B cell (primary cell): ENCODE measurements at regions of chr13 and their contacts with region 1.

Region 1: DNA sequence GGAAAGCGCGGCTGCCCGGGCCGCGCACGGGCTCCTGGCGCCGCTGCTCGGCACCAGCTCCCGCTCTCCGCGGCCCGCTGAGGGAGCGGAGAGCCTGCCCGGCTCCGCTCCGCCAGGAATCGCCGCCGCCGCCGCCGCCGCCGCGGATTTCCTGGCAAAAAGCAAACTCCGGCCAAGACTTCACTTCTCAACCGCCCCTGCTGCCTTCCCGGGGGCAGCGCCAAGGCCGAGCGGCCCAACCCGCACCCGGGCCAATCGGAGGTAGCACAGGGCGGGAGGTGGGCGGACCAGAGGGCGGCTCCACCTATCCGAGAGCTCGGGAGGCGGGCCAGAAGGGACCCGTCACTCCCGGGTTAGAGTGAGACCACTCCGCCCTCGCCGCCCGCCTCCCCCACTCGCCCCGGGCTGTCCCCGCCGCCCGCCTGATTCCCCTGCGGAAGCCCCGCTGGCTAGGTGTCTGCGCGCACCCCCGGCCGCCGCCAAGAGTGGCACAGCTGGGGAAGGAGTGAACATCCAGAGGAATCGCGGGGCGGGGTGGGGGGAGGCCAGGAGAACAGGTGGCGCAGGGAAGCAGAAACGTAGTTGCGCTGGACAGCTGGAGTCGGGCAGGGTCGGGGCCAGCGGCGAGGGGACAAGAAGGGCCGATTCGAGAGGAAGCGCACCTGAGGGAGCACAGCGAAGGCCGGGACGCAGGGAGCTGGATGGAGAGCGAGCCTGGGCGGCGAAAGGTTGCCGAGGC is at the start of gene LNX2:
- DNase-seq: peak; percentile 96
- ATAC-seq: peak; percentile 83
- H3K4me3 ChIP-seq: peak within 1 kb of the TSS; percentile 77 to 92 (median 90)
- H3K4me3 Mint-ChIP-seq: peak within 1 kb of the TSS; percentile 93
- H3K27ac ChIP-seq: peak within 1 kb of the TSS; percentile 98
- H3K27ac Mint-ChIP-seq: peak within 1 kb of the TSS; percentile 92
- H3K4me1 ChIP-seq: peaks cover 27 to 28% of the 10 kb centered on the region in 2 donors
- H3K4me1 Mint-ChIP-seq: peaks cover 62% of the 10 kb centered on the region
- H3K27me3 ChIP-seq: no peaks in the 10 kb centered on the region
- H3K27me3 Mint-ChIP-seq: no peaks in the 10 kb centered on the region
- CTCF ChIP-seq: no peak
- total RNA-seq, gene LNX2: 10.0 and 10.9 TPM in 2 replicates

Region 2: DNA sequence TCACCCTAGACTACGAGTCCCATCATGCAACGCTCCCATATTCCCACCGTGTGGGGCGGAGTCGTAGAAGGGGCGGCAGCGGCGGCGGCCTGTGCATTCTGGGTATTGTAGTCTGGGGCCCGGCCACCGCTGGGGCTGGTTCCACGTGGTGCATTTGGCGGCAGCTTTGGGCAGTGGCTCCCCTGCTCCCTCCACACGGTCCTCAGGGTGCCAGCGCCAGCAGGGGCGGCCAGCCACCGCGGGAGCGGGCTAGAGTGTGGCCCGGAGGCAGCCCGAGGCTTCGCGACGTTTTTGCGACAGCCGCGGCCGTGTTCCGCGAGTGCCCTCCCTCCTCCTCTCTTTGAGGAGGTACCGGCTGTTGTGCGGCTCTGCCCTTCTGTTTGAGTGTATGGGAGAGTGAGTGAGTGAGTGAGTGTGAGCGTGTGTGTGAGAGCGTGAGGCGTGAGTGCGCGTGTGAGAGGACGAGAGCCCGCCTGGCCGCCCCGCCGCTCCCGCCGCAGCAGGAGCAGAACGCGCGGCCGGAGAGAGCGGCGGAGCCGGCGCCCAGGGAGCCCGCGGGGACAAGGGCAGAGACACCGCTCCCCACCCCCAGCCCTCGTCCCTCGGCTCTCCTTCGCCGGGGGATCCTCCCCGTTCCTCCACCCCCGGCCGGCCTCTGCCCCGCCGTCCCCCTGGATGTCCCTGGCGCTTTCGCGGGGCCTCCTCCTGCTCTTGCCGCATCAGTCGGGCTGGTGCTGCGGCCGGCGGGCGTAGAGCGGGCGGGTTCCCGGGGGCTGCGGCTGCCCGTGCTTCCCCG is 1366.6 kb before region 1 on chr13 and contains the start of gene CDK8:
- CTCF ChIA-PET with region 1: no interaction called
- POLR2A ChIA-PET with region 1: no interaction called
- intact Hi-C with region 1: loop called (anchors 5 kb)
- DNase-seq: peak; percentile 97
- ATAC-seq: peak; percentile 86
- H3K4me3 ChIP-seq: peak within 1 kb of the TSS; percentile 66 to 98 (median 77)
- H3K4me3 Mint-ChIP-seq: peak within 1 kb of the TSS; percentile 83
- H3K27ac ChIP-seq: peak within 1 kb of the TSS; percentile 72 to 80
- H3K27ac Mint-ChIP-seq: peak within 1 kb of the TSS; percentile 81
- H3K4me1 ChIP-seq: peaks cover 14 to 17% of the 10 kb centered on the region in 2 donors
- H3K4me1 Mint-ChIP-seq: peaks cover 29% of the 10 kb centered on the region
- H3K27me3 ChIP-seq: peaks cover 0 to 4% (median 2%) of the 10 kb centered on the region in 4 experiments
- H3K27me3 Mint-ChIP-seq: peaks cover 8% of the 10 kb centered on the region
- CTCF ChIP-seq: no peak
- total RNA-seq, gene CDK8: 13.5 TPM in 2 replicates

Region 3: DNA sequence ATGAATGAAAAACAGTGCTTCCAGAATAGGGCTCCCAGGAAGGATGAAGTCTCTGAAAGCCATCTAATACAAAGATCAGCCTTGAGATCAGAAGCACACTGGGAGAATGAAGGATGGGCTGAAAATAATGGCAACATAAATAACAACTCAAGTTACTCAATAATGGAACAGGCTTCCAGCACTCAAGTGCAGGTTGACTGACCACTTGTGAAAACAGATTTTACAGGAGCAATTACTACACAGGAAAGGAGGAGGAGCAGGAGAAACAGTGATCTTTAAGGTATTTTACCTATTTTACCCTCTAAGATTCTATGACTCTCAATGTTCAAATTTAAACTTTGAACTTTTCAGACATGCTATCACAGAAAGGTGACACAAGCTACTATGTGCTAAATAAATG is 555.0 kb before region 1 on chr13:
- CTCF ChIA-PET with region 1: no interaction called
- POLR2A ChIA-PET with region 1: no interaction called
- intact Hi-C with region 1: no loop called
- DNase-seq: no peak
- ATAC-seq: no peak
- H3K4me3 ChIP-seq: no peak overlapping the region
- H3K4me3 Mint-ChIP-seq: no peak overlapping the region
- H3K27ac ChIP-seq: no peak overlapping the region
- H3K27ac Mint-ChIP-seq: no peak overlapping the region
- H3K4me1 ChIP-seq: no peaks in the 10 kb centered on the region
- H3K4me1 Mint-ChIP-seq: no peaks in the 10 kb centered on the region
- H3K27me3 ChIP-seq: no peaks in the 10 kb centered on the region
- H3K27me3 Mint-ChIP-seq: no peaks in the 10 kb centered on the region
- CTCF ChIP-seq: no peak

Region 4: DNA sequence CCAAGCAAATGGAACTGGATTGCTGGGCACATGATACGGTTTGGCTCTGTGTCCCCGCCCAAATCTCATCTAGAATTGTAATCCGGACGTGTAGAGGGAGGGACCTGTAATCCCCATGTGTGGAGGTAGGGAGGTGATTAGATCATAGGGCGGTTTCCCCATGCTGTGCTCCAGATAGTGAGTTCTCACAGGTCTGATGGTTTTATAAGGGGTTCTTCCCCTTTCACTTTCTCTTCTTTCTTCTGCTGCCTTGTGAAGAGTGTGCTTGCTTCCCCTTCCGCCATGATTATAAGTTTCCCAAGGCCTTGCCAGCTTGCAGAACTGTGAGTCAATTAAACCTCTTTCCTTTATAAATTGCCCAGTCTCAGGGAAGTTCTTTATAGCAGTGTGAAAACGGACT is 137.6 kb before region 1 on chr13:
- CTCF ChIA-PET with region 1: interaction called, 3 read pairs
- POLR2A ChIA-PET with region 1: interaction called, 4 read pairs
- intact Hi-C with region 1: loop called (anchors 1 kb)
- DNase-seq: peak; percentile 90
- ATAC-seq: peak; percentile 99
- H3K4me3 ChIP-seq: peak overlapping the region in 4 of 5 experiments; percentile 11 to 43 (median 30)
- H3K4me3 Mint-ChIP-seq: peak overlapping the region; percentile 81
- H3K27ac ChIP-seq: peak overlapping the region; percentile 71 to 82
- H3K27ac Mint-ChIP-seq: peak overlapping the region; percentile 93
- H3K4me1 ChIP-seq: peaks cover 37 to 45% of the 10 kb centered on the region in 2 donors
- H3K4me1 Mint-ChIP-seq: peaks cover 41% of the 10 kb centered on the region
- H3K27me3 ChIP-seq: no peaks in the 10 kb centered on the region
- H3K27me3 Mint-ChIP-seq: no peaks in the 10 kb centered on the region
- CTCF ChIP-seq: no peak

Region 5: DNA sequence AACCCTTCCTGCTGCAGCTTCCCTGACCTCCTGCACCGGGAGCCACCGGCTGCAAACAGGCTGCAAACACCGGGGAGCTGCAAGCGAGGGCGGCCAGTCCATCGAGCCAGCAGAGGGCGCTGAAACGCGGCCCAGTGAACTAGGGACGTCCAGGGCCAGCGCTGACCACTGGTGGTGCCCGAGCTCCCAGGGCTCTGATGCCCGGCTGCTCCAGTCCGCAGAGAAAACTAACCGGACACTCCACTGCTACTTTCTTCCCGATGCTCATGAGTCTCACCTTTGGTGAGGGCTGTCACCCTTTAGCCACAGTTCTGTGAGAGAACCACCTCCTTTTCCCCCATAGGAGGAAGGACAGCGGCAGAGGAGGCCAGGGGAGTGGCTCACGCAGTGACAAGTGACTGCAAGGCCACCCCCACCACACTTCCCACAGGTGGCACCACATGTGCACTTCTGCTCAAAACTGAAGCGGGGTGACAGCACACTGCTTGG is 87.3 kb before region 1 on chr13:
- CTCF ChIA-PET with region 1: interaction called, 13 read pairs
- POLR2A ChIA-PET with region 1: no interaction called
- intact Hi-C with region 1: loop called (anchors 10 kb)
- DNase-seq: peak; percentile 57
- ATAC-seq: peak; percentile 70
- H3K4me3 ChIP-seq: peak overlapping the region in 3 of 5 experiments; percentile 16 to 44 (median 17)
- H3K4me3 Mint-ChIP-seq: peak overlapping the region; percentile 69
- H3K27ac ChIP-seq: no peak overlapping the region
- H3K27ac Mint-ChIP-seq: no peak overlapping the region
- H3K4me1 ChIP-seq: peaks cover 9 to 15% of the 10 kb centered on the region in 2 donors
- H3K4me1 Mint-ChIP-seq: peaks cover 26% of the 10 kb centered on the region
- H3K27me3 ChIP-seq: no peaks in the 10 kb centered on the region
- H3K27me3 Mint-ChIP-seq: no peaks in the 10 kb centered on the region
- CTCF ChIP-seq: peak; percentile 73

Region 6: GRCh38 chr13:27595055-27595811 is 25.3 kb before region 1 on chr13:
- CTCF ChIA-PET with region 1: interaction called, 3 read pairs
- POLR2A ChIA-PET with region 1: no interaction called
- intact Hi-C with region 1: loop called (anchors 2 kb)
- DNase-seq: peak; percentile 37
- ATAC-seq: peak; percentile 28
- H3K4me3 ChIP-seq: no peak overlapping the region
- H3K4me3 Mint-ChIP-seq: no peak overlapping the region
- H3K27ac ChIP-seq: no peak overlapping the region
- H3K27ac Mint-ChIP-seq: no peak overlapping the region
- H3K4me1 ChIP-seq: peaks cover 40 to 43% of the 10 kb centered on the region in 2 donors
- H3K4me1 Mint-ChIP-seq: peaks cover 1% of the 10 kb centered on the region
- H3K27me3 ChIP-seq: no peaks in the 10 kb centered on the region
- H3K27me3 Mint-ChIP-seq: no peaks in the 10 kb centered on the region
- CTCF ChIP-seq: no peak

Region 7: DNA sequence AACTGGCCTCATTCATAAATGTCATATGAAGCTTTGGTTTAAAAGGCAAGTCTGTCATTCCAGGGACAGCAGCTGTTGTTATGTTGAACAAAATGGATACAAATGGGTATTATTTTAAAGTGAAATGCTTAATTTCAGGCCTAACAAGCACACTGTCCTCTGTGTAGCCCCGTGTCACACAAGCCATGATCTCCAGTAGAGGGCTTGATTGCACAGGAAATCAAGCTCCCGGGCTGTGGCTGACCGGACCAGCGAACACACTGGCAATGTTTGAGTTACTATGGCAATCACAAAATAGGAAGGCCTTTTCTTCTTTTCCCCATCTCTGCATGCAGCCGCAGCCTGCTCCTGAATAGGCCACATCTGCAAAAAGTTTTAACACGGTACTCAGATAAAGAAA is 107.7 kb after region 1 on chr13:
- CTCF ChIA-PET with region 1: no interaction called
- POLR2A ChIA-PET with region 1: no interaction called
- intact Hi-C with region 1: no loop called
- DNase-seq: no peak
- ATAC-seq: no peak
- H3K4me3 ChIP-seq: no peak overlapping the region
- H3K4me3 Mint-ChIP-seq: no peak overlapping the region
- H3K27ac ChIP-seq: no peak overlapping the region
- H3K27ac Mint-ChIP-seq: no peak overlapping the region
- H3K4me1 ChIP-seq: no peaks in the 10 kb centered on the region
- H3K4me1 Mint-ChIP-seq: no peaks in the 10 kb centered on the region
- H3K27me3 ChIP-seq: peaks cover 0 to 21% (median 2%) of the 10 kb centered on the region in 4 experiments
- H3K27me3 Mint-ChIP-seq: peaks cover 44% of the 10 kb centered on the region
- CTCF ChIP-seq: no peak